ENCODE measurements at regions of chr3 and their contacts with region 1.

Region 1: DNA sequence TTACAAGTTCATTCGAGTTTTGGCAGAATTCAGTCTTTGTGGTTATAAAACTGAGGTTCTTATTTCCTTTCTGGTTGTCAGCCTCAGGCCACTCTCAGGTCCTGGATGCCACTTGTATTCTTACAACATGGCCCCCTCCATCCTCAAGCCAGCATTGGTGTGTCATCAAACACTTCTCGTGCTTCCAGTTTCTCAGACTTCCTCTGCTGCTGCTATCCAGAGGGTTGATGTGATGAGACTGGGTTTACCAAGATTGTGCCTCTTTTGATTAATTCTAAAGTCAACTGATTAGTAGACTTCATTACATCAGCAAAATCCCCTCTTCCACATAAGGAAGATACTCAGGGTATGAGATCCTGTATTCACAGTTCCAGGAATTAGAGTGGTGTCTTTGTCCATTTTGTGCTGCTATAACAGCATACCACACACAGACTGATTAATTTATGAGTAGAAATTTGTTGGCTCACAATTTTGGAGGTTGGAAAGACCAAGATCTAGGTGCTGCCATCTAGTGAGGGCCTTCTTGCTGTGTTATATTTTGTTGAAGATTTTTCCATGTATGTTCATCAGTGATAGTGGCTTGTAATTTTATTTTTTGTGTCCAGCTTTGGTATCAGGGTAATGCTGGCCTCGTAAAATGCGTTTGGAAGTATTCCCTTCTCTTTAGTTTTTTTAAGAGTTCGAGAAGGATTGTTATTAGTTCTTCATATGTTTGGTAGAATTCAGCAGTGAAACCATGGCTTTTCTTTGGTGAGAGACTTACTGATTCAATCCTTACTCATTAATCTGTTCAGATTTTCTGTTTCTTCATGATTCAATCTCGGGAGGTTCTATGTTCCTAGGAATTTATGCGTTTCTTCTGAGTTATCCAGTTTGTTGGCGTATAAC is 11.1 kb downstream of the LRCH3 start:
- DNase-seq: peak in 1 of 4 experiments; percentile 46
- ATAC-seq: peak; percentile 60
- H3K4me3 ChIP-seq: no peak overlapping the region
- H3K27ac ChIP-seq: no peak overlapping the region
- H3K4me1 ChIP-seq: peaks cover 7 to 19% of the 10 kb centered on the region in 2 experiments; a peak in 3 of 5 replicates
- H3K27me3 ChIP-seq: no peaks in the 10 kb centered on the region
- CTCF ChIP-seq: peak; percentile 41 to 70 (median 51); a peak in 5 of 6 replicates
- EP300 ChIP-seq: no peak
- POLR2A ChIP-seq: no peak
- RAD21 ChIP-seq: peak; percentile 26 to 57; a peak in 3 of 4 replicates

Region 2: DNA sequence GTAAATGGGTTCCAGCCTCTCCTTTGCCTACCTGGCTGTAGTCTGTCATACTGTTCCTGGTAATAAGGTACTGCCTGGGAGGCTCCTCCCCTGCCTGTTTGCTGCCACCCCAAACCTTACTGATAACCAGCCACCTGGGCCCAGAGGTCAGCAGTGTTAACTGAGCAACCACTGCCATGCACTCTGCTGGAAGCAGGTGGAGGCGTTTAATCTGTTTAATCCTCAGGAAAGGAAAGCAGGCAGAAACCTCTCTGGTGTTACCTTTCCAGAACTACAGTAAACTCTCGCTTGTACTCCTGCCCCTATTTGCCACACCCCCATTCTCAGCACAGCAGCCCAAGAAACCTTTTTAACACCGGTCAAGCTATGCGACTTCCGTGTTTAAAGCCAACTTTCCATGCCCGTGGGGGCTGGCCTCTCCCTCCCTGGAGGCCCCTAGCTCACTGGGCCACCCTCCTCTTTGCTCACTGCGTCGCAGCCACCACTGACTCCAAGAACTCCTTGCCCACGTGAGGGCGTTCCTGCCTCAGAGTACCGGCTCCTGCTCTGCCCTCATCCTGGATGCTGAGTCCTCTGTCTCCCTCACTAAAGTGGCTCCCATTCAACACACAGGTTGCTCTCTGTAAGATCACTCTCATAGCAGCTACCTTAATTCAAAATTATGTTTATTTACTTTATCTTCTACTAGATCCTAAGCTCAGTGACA is 254.7 kb before region 1 on chr3:
- CTCF ChIA-PET with region 1: no interaction called
- POLR2A ChIA-PET with region 1: no interaction called
- in situ Hi-C with region 1: no loop called
- intact Hi-C with region 1: loop called (anchors 5 kb)
- DNase-seq: peak; percentile 37 to 68 (median 53)
- ATAC-seq: peak; percentile 94
- H3K4me3 ChIP-seq: no peak overlapping the region
- H3K27ac ChIP-seq: no peak overlapping the region
- H3K4me1 ChIP-seq: peaks cover 0 to 2% of the 10 kb centered on the region in 2 experiments; a peak in 1 of 5 replicates
- H3K27me3 ChIP-seq: peaks cover 47 to 67% of the 10 kb centered on the region in 2 experiments
- CTCF ChIP-seq: peak; percentile 70 to 80 (median 71)
- EP300 ChIP-seq: no peak
- POLR2A ChIP-seq: no peak
- RAD21 ChIP-seq: peak; percentile 76 to 93

Region 3: DNA sequence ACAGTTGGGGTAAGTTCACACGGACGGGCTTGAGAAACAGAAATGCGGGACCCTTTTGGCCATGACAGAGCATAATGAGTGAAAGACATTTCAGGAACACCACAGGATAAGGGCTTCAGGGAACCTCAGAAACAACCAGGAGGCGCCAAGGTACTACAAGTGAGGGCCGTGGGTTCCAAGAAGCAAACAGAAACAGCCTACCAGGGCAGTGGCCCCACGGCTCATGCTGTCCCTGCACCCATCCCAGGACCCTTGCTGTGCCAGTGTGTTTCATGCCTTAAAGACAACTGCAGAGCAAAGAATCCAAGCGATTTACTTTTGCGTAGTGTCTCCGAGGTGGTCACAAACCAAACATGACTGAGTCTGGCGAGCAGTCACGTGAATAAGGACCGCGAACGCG is 119.4 kb before region 1 on chr3:
- CTCF ChIA-PET with region 1: no interaction called
- POLR2A ChIA-PET with region 1: no interaction called
- in situ Hi-C with region 1: no loop called
- intact Hi-C with region 1: loop called (anchors 10 kb)
- DNase-seq: no peak
- ATAC-seq: no peak
- H3K4me3 ChIP-seq: no peak overlapping the region
- H3K27ac ChIP-seq: no peak overlapping the region
- H3K4me1 ChIP-seq: no peaks in the 10 kb centered on the region
- H3K27me3 ChIP-seq: no peaks in the 10 kb centered on the region
- CTCF ChIP-seq: peak in 2 of 3 experiments; percentile 2 to 15; a peak in 2 of 6 replicates
- EP300 ChIP-seq: no peak
- POLR2A ChIP-seq: no peak
- RAD21 ChIP-seq: no peak

Region 4: GRCh38 chr3:197736491-197737318 is 65.4 kb before region 1 on chr3 and contains the start of gene RUBCN:
- CTCF ChIA-PET with region 1: no interaction called
- POLR2A ChIA-PET with region 1: interaction called, 3 read pairs
- in situ Hi-C with region 1: no loop called
- intact Hi-C with region 1: loop called (anchors 2 kb)
- DNase-seq: peak; percentile 95 to 98 (median 96)
- ATAC-seq: peak; percentile 97
- H3K4me3 ChIP-seq: peak within 1 kb of the TSS; percentile 90
- H3K27ac ChIP-seq: peak within 1 kb of the TSS; percentile 76
- H3K4me1 ChIP-seq: peaks cover 24 to 25% of the 10 kb centered on the region in 2 experiments
- H3K27me3 ChIP-seq: no peaks in the 10 kb centered on the region
- CTCF ChIP-seq: no peak
- EP300 ChIP-seq: no peak
- POLR2A ChIP-seq: peak; percentile 83
- RAD21 ChIP-seq: no peak
- polyA plus RNA-seq, gene RUBCN: 8.4 to 9.3 TPM

Measured in K562 (cell line).